Transverse colon (tissue), 4 donors: ENCODE measurements at regions of chr7 and their contacts with region 1.

Region 1: GRCh38 chr7:120138497-120138896 is 134.5 kb upstream of the KCND2 start:
- DNase-seq: no peak
- H3K4me3 ChIP-seq: no peak overlapping the region
- H3K27ac ChIP-seq: no peak overlapping the region
- H3K4me1 ChIP-seq: no peaks in the 10 kb centered on the region
- H3K27me3 ChIP-seq: no peaks in the 10 kb centered on the region
- CTCF ChIP-seq: no peak
- EP300 ChIP-seq: no peak
- POLR2A ChIP-seq: no peak

Region 2: DNA sequence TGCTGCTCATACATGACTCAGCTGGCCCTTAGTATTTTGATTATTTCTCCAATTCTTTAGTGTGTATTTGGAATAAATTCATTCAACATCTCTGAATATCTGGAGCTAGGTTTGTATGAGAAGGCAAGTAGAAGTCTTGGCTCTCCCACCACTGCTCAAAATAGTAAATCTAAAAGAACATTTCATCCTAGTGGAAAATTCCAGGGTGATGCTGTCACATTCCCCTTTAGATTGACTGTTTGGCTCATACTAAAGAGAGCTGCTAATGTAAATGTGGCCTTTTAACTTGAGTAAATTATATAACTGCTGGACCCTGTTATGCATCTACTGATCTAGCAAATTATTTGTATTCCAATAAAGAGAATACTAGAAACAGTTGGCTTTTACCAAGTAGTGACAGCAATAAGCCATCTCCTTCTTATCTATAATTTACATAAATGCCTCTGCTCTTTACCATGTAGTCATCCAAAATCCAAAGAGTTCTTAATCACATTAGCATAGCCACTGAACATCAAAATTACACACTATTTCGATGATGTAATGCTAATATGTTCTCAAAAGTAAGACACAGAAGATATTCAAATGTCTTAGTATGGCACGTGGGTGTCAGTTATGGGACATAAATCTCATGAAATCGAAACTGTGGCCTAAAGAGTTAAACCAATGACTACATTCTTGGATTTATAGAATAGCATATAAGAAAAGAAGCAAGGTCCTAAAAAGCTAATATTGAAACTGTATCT is 47.6 kb after region 1 on chr7:
- in situ Hi-C with region 1: no loop called
- intact Hi-C with region 1: loop called (anchors 2 kb)
- DNase-seq: no peak
- H3K4me3 ChIP-seq: no peak overlapping the region
- H3K27ac ChIP-seq: no peak overlapping the region
- H3K4me1 ChIP-seq: no peaks in the 10 kb centered on the region
- H3K27me3 ChIP-seq: no peaks in the 10 kb centered on the region
- CTCF ChIP-seq: no peak
- EP300 ChIP-seq: no peak
- POLR2A ChIP-seq: no peak